ENCODE measurements at regions of chr1 and their contacts with region 1.

Region 1: GRCh38 chr1:111436726-111437125 is 9.2 kb upstream of the OVGP1 start:
- DNase-seq: no peak
- H3K4me3 ChIP-seq: no peak overlapping the region
- H3K27ac ChIP-seq: no peak overlapping the region
- H3K4me1 ChIP-seq: no peaks in the 10 kb centered on the region
- H3K27me3 ChIP-seq: no peaks in the 10 kb centered on the region
- CTCF ChIP-seq: no peak
- POLR2A ChIP-seq: no peak

Region 2: DNA sequence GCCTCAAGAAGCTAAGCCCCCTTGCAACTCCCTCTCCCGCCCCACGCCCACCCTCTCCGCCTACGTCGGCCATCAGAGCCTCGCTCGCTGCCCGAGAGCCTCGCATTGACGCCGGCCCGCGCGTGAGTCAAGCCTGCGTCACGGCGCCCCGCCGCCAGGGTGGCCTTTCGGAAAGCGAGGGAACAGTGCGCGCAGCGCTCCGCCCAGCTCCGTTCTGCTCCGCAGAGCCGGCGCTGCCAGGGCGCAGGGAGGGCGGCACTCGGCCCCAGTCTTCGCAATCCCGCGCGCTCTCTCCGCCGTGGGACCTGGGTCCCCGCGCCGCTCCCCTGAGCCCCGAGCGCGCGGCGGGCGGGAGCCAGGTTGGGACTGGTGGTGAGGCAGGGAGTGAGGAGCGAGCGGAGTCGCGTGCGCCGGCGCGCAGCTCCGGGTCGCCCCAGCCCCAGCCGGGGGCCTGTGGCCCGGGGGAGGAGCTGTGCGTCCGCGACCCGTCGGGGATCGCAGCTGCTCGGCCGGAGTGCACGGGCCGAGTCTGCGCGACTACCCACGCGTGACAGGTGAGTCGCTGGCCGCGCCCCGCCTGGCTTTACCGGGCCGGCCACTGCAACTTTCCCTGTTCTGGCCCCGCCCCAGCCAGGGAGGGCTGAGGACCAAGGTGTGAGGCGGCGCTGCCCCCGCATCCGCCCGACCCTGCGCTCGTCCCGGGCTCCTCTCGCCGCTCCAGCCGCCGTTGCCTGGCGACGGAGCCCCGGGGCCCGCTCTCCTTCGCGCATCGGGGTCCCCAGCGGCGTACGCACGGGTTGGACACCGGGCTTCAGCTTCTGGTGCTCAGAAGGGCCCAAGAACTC is 1286.2 kb before region 1 on chr1 and contains the start of gene SLC6A17:
- intact Hi-C with region 1: loop called (anchors 5 kb)
- DNase-seq: no peak
- H3K4me3 ChIP-seq: peak within 1 kb of the TSS; percentile 1 to 16
- H3K27ac ChIP-seq: no peak within 1 kb of the TSS
- H3K4me1 ChIP-seq: peaks cover 11% of the 10 kb centered on the region
- H3K27me3 ChIP-seq: peaks cover 3% of the 10 kb centered on the region
- CTCF ChIP-seq: no peak
- POLR2A ChIP-seq: no peak
- total RNA-seq, gene SLC6A17: 1.7 TPM

Region 3: DNA sequence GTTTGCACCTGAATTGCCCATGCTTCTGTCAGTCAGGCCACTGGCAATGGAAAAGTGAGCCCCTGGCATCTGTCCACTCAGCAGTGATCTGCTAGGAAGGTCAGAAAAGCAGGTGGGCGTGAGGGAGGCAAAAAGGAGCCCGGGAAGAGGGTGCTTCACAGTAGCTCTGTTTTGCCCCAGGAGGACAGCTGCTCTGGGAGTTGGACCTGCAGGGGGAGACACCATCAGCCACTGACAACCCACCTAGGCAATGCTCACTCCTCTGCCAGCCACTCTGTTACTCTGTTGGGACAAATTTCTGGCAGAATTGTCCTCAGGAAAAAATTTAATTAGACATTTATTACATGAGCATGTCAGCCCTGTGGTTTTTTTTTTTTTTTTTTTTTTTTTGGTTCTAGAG is 1782.7 kb after region 1 on chr1:
- intact Hi-C with region 1: no loop called
- DNase-seq: no peak
- H3K4me3 ChIP-seq: no peak overlapping the region
- H3K27ac ChIP-seq: no peak overlapping the region
- H3K4me1 ChIP-seq: no peaks in the 10 kb centered on the region
- H3K27me3 ChIP-seq: no peaks in the 10 kb centered on the region
- CTCF ChIP-seq: no peak
- POLR2A ChIP-seq: no peak